ENCODE measurements at regions of chr1 and their contacts with region 1.

Region 1: DNA sequence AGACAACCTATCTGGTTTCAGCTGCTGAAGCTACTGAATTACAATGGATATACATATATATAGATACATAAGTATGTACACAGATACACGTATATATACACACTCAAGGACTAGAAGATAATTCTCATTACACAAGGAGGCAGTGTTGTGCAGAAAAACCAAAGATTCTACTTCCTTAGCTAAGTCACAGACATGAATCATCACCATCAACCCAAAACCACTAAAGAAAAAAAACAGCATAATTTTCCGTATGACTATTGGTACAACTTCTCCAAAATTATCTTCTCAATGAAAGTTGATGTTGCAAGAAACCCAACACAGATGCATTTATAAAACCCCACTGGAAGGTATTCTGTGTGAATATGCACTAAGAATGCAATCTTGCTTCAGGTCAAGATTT is 36.8 kb upstream of the RPF1 start:
- DNase-seq: peak in 7 of 9 donors; percentile 51 to 77 (median 66)
- ATAC-seq: peak; percentile 99
- H3K4me3 ChIP-seq: no peak overlapping the region
- H3K4me3 Mint-ChIP-seq: peak overlapping the region; percentile 14 to 66 (median 41)
- H3K27ac ChIP-seq: no peak overlapping the region
- H3K27ac Mint-ChIP-seq: peak overlapping the region in 5 of 9 donors; percentile 35 to 81 (median 72)
- H3K4me1 ChIP-seq: peaks cover 10 to 21% of the 10 kb centered on the region in 2 donors
- H3K4me1 Mint-ChIP-seq: peaks cover 5 to 24% (median 16%) of the 10 kb centered on the region in 7 donors
- H3K27me3 ChIP-seq: no peaks in the 10 kb centered on the region
- H3K27me3 Mint-ChIP-seq: peaks cover 0 to 16% (median 11%) of the 10 kb centered on the region in 5 donors

Region 2: GRCh38 chr1:83950106-83950661 is 492.1 kb before region 1 on chr1:
- CTCF ChIA-PET with region 1: no interaction called
- POLR2A ChIA-PET with region 1: no interaction called
- intact Hi-C with region 1: no loop called
- DNase-seq: no peak
- ATAC-seq: no peak
- H3K4me3 ChIP-seq: no peak overlapping the region
- H3K4me3 Mint-ChIP-seq: no peak overlapping the region
- H3K27ac ChIP-seq: no peak overlapping the region
- H3K27ac Mint-ChIP-seq: no peak overlapping the region
- H3K4me1 ChIP-seq: no peaks in the 10 kb centered on the region
- H3K4me1 Mint-ChIP-seq: no peaks in the 10 kb centered on the region
- H3K27me3 ChIP-seq: no peaks in the 10 kb centered on the region
- H3K27me3 Mint-ChIP-seq: peaks cover 4 to 19% (median 13%) of the 10 kb centered on the region in 5 donors

Region 3: DNA sequence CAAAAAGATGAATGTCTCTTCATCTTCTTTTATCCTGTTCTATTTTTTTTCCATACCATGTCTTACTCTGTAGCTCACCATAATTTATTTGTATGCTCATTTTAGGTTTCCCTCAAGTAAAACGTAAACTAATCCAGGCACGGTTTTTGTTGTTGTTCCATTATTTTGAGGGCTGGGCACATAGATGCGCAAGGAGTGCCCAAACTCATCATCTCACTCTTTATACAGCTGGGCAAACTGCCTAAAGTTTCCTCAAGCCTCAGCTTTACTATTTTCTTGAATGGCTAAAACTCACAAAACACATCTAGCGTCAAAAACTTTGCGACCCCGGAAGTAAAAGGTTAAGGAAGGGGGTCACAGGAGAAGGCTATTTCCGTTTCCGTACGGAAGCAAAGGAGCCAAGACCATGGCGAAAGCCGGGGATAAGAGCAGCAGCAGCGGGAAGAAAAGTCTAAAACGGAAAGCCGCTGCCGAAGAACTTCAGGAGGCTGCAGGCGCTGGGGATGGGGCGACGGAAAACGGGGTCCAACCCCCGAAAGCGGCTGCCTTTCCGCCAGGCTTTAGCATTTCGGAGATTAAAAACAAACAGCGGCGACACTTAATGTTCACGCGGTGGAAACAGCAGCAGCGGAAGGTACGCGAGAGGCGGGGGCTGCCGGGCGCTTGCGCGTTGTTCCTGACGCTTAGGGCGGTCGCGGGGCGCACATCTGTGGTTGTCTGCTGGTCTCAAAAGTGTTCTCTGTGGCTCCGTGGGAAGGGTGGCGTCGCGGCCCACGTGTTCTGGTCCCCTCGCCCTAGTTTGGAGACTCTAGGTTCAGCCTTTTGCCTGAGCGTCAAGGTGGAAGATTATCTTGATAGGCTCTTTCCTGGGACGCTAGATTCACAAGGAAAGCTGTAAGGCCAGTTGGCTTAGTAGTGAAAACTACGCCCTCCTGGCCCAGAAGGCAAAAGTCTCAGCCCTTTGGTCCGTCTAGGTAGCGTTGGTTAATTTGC is 36.9 kb after region 1 on chr1 and contains the start of gene RPF1:
- CTCF ChIA-PET with region 1: interaction called, 4 read pairs
- POLR2A ChIA-PET with region 1: interaction called, 7 read pairs
- intact Hi-C with region 1: loop called (anchors 1 kb)
- DNase-seq: peak; percentile 61 to 88 (median 83)
- ATAC-seq: peak; percentile 97
- H3K4me3 ChIP-seq: peak within 1 kb of the TSS; percentile 72
- H3K4me3 Mint-ChIP-seq: peak within 1 kb of the TSS; percentile 88 to 100 (median 98)
- H3K27ac ChIP-seq: peak within 1 kb of the TSS; percentile 80
- H3K27ac Mint-ChIP-seq: peak within 1 kb of the TSS; percentile 98 to 100 (median 99)
- H3K4me1 ChIP-seq: peaks cover 22 to 28% of the 10 kb centered on the region in 2 donors
- H3K4me1 Mint-ChIP-seq: peaks cover 29 to 60% (median 49%) of the 10 kb centered on the region in 7 donors
- H3K27me3 ChIP-seq: peaks cover 0 to 7% of the 10 kb centered on the region in 2 donors
- H3K27me3 Mint-ChIP-seq: peaks cover 21 to 35% (median 26%) of the 10 kb centered on the region in 5 donors
- total RNA-seq, gene RPF1: 35.5 to 52.3 (median 44.1) TPM

Region 4: DNA sequence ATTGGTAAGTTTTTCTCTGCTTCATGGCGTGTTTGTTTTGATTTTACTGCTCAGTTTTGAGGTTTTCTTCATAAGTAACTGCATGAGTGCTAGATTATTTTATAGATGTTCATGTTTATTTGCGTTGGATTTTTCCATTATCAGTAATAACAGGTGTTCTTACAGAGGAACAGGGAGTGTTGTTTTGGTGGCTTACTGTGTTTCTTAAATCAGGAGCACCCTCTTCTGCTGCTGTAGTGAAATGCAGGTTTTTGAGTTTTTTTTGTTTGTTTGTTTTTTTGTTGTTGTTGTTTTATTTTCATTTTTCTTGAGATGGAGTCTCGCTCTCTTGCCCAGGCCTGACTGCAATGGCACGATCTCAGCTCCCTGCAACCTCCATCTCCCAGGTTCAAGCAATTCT is 99.4 kb after region 1 on chr1:
- CTCF ChIA-PET with region 1: interaction called, 7 read pairs
- POLR2A ChIA-PET with region 1: no interaction called
- intact Hi-C with region 1: loop called (anchors 1 kb)
- DNase-seq: peak in 2 of 9 donors; percentile 2 to 9
- ATAC-seq: no peak
- H3K4me3 ChIP-seq: no peak overlapping the region
- H3K4me3 Mint-ChIP-seq: no peak overlapping the region
- H3K27ac ChIP-seq: no peak overlapping the region
- H3K27ac Mint-ChIP-seq: peak overlapping the region in 1 of 9 donors; percentile 6
- H3K4me1 ChIP-seq: no peaks in the 10 kb centered on the region
- H3K4me1 Mint-ChIP-seq: peaks cover 0 to 26% (median 0%) of the 10 kb centered on the region in 7 donors
- H3K27me3 ChIP-seq: no peaks in the 10 kb centered on the region
- H3K27me3 Mint-ChIP-seq: no peaks in the 10 kb centered on the region

Region 5: DNA sequence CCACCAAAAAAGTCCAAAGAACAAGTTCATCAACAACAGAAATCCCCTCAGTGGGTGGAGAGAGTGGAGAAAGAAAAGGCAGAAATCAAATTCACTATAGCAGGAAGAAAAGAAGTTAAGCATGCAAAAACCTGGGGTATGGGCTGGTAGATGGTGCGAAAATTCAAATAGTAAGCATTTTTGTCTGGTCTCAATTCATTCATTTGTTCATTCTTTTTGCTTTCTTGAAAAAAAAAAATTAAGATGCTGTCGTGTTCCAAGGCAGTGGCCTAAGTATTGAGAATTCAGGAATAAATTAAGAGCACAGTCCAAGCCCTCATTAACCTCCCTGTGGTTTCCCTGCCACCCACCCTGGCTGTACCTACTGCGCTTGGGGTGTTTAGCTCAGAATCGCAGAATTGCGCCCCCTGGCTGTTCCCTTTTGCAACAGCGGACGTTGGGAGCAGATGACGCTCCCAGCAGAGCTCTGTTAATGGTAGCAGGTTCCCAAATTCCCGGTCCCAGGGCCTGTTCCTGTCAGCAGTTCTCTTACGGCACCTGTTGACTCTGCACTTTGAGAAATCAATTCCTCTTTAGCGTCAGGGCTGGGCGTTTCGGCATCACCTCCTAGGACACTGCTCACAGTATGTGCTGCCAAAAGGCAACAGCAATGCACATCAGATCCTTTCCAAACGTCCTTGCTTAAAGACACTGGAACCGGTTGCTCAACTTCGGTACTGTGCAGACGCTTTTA is 282.0 kb after region 1 on chr1:
- CTCF ChIA-PET with region 1: interaction called, 4 read pairs
- POLR2A ChIA-PET with region 1: no interaction called
- intact Hi-C with region 1: loop called in 1 of 2 experiments (anchors 1 kb)
- DNase-seq: peak; percentile 11 to 43 (median 35)
- ATAC-seq: peak; percentile 74
- H3K4me3 ChIP-seq: no peak overlapping the region
- H3K4me3 Mint-ChIP-seq: no peak overlapping the region
- H3K27ac ChIP-seq: no peak overlapping the region
- H3K27ac Mint-ChIP-seq: no peak overlapping the region
- H3K4me1 ChIP-seq: no peaks in the 10 kb centered on the region
- H3K4me1 Mint-ChIP-seq: peaks cover 0 to 2% (median 0%) of the 10 kb centered on the region in 7 donors
- H3K27me3 ChIP-seq: no peaks in the 10 kb centered on the region
- H3K27me3 Mint-ChIP-seq: peaks cover 0 to 22% (median 0%) of the 10 kb centered on the region in 5 donors

Region 6: DNA sequence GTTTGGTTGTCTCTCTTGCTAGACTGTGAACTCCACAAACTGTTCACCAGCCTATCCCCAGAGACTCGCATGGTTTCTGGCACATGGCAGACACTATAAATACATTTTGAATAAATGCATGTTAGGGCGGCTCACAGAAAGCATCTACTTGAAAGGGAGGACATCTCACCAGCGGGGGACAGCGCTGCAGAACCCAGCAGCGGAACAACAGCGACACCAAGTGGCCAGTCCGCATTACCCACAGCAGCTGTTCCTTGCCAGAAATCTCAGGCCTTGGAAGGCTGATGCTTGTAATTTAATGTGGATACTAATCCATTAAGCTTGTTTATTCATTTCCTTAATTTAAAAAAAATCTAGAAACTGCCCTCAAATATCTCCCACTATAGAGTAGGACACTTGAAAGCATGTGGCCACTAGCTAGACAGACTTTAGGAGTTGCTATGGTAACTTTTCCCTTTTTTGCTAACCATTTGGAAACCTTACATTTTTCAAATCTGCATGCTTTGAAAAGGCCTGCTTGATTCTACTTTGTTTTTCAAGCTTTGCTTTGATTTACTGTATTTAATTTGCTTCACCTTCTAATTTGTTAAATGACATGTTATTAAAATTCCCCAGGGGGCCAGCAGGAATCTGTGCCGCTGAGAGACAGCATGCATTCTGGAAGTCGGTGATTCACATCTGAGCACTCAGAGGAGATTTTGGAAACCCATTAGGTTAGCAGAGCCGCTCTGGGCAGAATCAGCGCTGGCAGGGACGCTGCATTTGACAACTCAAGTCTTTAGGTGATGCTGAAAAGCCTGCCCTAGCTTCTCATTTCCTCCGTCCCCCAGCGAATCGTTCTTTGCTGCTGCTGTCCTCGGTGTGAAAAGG is 311.5 kb after region 1 on chr1:
- CTCF ChIA-PET with region 1: interaction called, 13 read pairs
- POLR2A ChIA-PET with region 1: no interaction called
- intact Hi-C with region 1: loop called (anchors 1 kb)
- DNase-seq: peak; percentile 47 to 77 (median 67)
- ATAC-seq: peak; percentile 93
- H3K4me3 ChIP-seq: no peak overlapping the region
- H3K4me3 Mint-ChIP-seq: no peak overlapping the region
- H3K27ac ChIP-seq: no peak overlapping the region
- H3K27ac Mint-ChIP-seq: peak overlapping the region in 1 of 9 donors; percentile 29
- H3K4me1 ChIP-seq: no peaks in the 10 kb centered on the region
- H3K4me1 Mint-ChIP-seq: peaks cover 0 to 7% (median 3%) of the 10 kb centered on the region in 7 donors
- H3K27me3 ChIP-seq: no peaks in the 10 kb centered on the region
- H3K27me3 Mint-ChIP-seq: peaks cover 9 to 26% (median 18%) of the 10 kb centered on the region in 5 donors

Region 7: DNA sequence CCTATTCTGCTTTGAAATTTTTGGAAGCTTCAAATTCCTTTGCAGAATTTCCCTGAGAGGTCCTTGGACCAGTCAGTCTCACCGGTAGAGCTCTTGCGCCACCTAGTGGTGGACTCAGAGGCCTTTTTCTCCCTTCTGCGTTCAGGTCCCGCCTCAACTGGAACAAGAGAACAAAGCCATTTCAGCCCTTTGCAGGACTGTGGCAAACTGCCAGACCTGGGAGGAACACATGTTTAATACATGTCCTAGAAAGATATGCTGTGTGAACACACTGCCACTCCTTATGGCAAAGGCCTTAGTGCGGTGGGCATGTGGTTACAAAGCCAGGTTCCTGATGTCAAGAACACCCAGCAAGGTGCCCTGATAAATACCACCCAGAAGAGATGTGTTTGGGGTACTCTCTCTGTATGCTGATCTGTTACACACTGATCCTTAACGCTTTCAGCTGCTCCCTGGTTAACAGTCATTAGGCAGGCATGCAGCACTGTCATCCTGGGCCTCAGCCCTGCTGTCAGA is 330.2 kb after region 1 on chr1:
- CTCF ChIA-PET with region 1: interaction called, 3 read pairs
- POLR2A ChIA-PET with region 1: no interaction called
- intact Hi-C with region 1: loop called (anchors 1 kb)
- DNase-seq: peak; percentile 51 to 74 (median 64)
- ATAC-seq: peak; percentile 83
- H3K4me3 ChIP-seq: no peak overlapping the region
- H3K4me3 Mint-ChIP-seq: no peak overlapping the region
- H3K27ac ChIP-seq: no peak overlapping the region
- H3K27ac Mint-ChIP-seq: no peak overlapping the region
- H3K4me1 ChIP-seq: no peaks in the 10 kb centered on the region
- H3K4me1 Mint-ChIP-seq: peaks cover 0 to 4% (median 0%) of the 10 kb centered on the region in 7 donors
- H3K27me3 ChIP-seq: no peaks in the 10 kb centered on the region
- H3K27me3 Mint-ChIP-seq: peaks cover 5 to 31% (median 9%) of the 10 kb centered on the region in 5 donors

Measured in naive thymus-derived CD4-positive, alpha-beta T cell (primary cell).